Ovary (tissue), 10 donors: ENCODE measurements at regions of chr22 and their contacts with region 1.

Region 1: GRCh38 chr22:28855355-28856094 is 27.8 kb upstream of the ZNRF3 start:
- DNase-seq: peak in 3 of 5 donors; percentile 29 to 63 (median 30)
- H3K4me3 ChIP-seq: no peak overlapping the region
- H3K27ac ChIP-seq: no peak overlapping the region
- H3K4me1 ChIP-seq: no peaks in the 10 kb centered on the region
- H3K27me3 ChIP-seq: no peaks in the 10 kb centered on the region
- CTCF ChIP-seq: peak; percentile 91 to 96 (median 95)
- EP300 ChIP-seq: no peak
- POLR2A ChIP-seq: no peak

Region 2: DNA sequence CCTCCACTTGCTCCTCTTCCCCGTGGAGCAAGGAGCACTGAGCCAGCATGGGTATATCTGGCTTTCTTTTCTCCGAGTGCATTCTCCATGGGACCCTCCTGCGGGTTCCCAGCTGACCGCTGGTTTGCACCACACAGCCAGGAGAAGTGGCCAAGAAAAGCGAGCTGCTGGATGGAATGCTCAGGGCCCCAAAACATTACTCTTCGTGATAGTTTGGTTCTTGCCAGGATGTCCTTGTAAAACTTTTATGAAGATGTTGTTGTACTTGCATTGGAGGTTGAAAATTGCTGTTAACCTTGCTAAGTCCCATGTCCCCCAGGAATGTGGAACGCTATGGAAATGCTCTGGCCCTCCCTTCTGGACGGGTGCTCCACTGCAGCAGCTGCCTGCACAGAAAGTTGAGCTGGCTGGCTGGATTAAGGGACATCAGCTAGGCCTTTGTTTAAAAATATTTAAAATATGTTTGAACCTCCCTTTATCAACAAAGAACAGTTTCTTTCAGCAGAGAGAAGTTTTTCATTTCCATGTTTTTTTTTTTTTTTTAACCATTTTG is 96.5 kb after region 1 on chr22:
- intact Hi-C with region 1: loop called in 1 of 4 experiments (anchors 10 kb)
- DNase-seq: peak in 4 of 5 donors; percentile 24 to 50 (median 35)
- H3K4me3 ChIP-seq: no peak overlapping the region
- H3K27ac ChIP-seq: peak overlapping the region in 1 of 2 donors; percentile 5
- H3K4me1 ChIP-seq: peaks cover 11% of the 10 kb centered on the region
- H3K27me3 ChIP-seq: no peaks in the 10 kb centered on the region
- CTCF ChIP-seq: peak in 2 of 3 donors; percentile 5 to 15
- EP300 ChIP-seq: no peak
- POLR2A ChIP-seq: no peak

Region 3: DNA sequence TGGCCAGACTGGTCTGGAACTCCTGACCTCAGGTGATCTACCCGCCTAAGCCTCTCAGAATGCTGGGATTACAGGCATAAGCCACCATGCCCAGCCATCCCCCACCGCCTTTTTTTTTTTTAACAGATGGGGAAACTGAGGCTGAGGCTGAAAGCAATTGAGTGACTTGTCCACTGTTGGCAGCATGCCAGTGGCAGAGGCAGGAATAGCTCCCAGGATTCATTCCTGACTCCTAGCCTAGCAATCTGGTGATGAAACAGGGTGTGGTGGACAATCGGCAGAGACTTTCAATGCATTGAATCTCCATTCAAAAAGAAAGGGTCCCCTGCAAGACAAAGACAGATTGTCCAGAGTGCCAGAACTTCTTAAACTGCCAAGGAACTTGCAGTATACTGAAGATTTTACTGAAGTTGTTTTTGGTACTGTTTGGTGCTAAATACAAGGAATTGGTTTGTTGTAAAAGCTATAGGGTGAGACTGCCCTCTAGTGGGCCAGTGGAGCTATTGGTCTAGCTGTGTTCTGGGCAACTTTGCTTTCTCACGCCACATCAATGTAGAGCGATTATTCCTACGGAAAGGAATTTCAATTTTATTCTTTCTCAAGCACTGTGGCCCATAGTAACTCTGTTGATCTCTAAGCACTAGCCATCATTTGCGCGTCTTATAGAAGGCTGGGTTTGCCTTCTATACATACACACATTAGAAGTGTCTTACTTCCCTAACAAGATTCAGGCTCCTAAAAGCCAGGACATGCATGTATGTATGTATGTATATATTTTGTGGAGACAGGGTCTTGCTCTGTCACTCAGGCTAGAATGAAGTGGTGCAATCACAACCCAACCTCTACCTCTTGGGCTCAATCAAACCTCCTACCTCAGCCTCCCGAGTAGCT is 185.1 kb after region 1 on chr22:
- intact Hi-C with region 1: loop called (anchors 2 to 10 kb)
- DNase-seq: peak; percentile 61 to 83 (median 70)
- H3K4me3 ChIP-seq: no peak overlapping the region
- H3K27ac ChIP-seq: no peak overlapping the region
- H3K4me1 ChIP-seq: peaks cover 9% of the 10 kb centered on the region
- H3K27me3 ChIP-seq: no peaks in the 10 kb centered on the region
- CTCF ChIP-seq: peak; percentile 86 to 95 (median 92)
- EP300 ChIP-seq: no peak
- POLR2A ChIP-seq: no peak

Region 4: GRCh38 chr22:29154364-29155048 is 299.0 kb after region 1 on chr22:
- intact Hi-C with region 1: loop called in 2 of 4 experiments (anchors 5 to 10 kb)
- DNase-seq: peak; percentile 68 to 86 (median 83)
- H3K4me3 ChIP-seq: no peak overlapping the region
- H3K27ac ChIP-seq: peak overlapping the region in 1 of 2 donors; percentile 34
- H3K4me1 ChIP-seq: peaks cover 3% of the 10 kb centered on the region
- H3K27me3 ChIP-seq: no peaks in the 10 kb centered on the region
- CTCF ChIP-seq: peak; percentile 88 to 89 (median 89)
- EP300 ChIP-seq: no peak
- POLR2A ChIP-seq: no peak